ENCODE measurements at regions of chr18 and their contacts with region 1.

Region 1: DNA sequence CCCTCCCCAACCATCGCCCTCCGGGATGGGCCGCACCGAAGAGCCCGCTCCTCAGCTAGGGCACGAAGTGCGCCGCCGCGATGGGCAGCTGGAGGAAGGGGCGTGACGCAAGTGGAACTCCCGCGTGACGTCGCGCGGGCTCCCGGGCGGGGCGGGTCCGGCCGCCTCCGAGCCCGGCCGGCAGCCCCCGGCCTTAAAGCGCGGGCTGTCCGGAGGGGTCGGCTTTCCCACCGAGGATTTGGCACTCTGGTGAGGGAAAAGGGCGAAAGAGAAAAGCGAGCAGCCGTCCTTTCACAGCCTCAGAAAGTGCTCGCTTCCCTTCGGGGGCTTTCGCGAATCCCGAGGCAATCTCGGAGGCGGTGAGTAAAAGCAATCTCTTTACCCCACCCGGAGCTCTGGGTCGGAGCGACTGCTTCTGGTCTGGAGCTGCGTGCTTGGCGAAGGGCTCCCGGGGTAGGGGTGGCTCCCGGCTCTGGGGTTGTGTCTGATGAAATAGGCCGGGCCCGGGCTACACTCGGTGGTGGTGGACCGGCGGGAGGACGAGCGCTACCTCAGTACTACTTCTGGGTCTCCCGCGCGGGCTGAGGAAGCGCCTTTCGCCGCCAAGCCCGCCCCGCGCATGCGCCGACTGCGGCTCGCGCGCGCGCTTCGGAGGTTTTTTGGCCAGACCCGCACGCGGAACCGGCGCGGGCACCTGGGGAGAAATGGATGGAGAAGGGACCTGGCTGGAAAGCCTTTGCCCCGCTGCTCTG is at the start of gene RBBP8:
- DNase-seq: peak; percentile 43 to 46
- ATAC-seq: peak; percentile 82 to 88
- H3K4me3 ChIP-seq: peak within 1 kb of the TSS; percentile 56 to 90 (median 74)
- H3K27ac ChIP-seq: peak within 1 kb of the TSS; percentile 79 to 92 (median 86)
- H3K4me1 ChIP-seq: peaks cover 0 to 11% of the 10 kb centered on the region in 2 donors
- H3K27me3 ChIP-seq: no peaks in the 10 kb centered on the region
- CTCF ChIP-seq: no peak
- POLR2A ChIP-seq: peak; percentile 54 to 72
- total RNA-seq, gene RBBP8: 1.3 to 4.7 (median 1.7) TPM

Region 2: GRCh38 chr18:22790545-22791309 is 142.7 kb before region 1 on chr18:
- in situ Hi-C with region 1: no loop called
- intact Hi-C with region 1: loop called (anchors 10 kb)
- DNase-seq: no peak
- ATAC-seq: no peak
- H3K4me3 ChIP-seq: no peak overlapping the region
- H3K27ac ChIP-seq: no peak overlapping the region
- H3K4me1 ChIP-seq: no peaks in the 10 kb centered on the region
- H3K27me3 ChIP-seq: no peaks in the 10 kb centered on the region
- CTCF ChIP-seq: no peak
- POLR2A ChIP-seq: no peak

Region 3: DNA sequence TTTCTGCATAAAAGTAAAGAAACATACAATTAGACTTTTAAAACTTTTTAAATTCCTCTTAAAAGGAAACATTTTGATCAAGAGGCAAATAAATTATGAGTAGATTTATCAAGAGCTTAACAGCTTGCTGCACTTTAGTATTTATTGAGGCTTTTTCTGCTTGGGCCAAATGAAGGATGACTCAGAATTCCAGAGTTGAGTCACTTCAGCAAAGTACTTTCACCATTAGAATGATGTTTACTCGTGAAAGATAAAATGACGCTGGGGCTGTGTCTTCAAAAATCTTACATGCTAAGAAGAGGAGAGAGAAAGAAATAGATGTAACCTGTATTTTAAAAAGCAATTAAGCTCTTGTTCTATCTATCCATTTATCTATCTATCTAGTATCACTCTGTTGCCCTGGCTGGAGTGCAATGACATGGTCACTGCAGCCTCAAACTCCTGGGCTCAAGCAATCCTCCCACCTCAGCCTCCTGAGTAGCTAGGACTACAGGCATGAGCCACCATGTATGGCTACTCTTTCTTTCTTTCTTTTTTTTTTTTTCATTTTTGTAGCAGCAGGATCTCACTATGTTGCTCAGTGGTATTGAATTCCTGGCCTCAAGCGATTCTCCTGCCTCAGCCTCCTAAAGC is 444.4 kb after region 1 on chr18:
- in situ Hi-C with region 1: loop called in 1 of 4 experiments (anchors 25 kb)
- intact Hi-C with region 1: no loop called
- DNase-seq: no peak
- ATAC-seq: peak; percentile 68 to 75
- H3K4me3 ChIP-seq: no peak overlapping the region
- H3K27ac ChIP-seq: peak overlapping the region; percentile 42 to 64 (median 46)
- H3K4me1 ChIP-seq: peaks cover 7 to 9% of the 10 kb centered on the region in 2 donors
- H3K27me3 ChIP-seq: no peaks in the 10 kb centered on the region
- CTCF ChIP-seq: no peak
- POLR2A ChIP-seq: no peak

Region 4: DNA sequence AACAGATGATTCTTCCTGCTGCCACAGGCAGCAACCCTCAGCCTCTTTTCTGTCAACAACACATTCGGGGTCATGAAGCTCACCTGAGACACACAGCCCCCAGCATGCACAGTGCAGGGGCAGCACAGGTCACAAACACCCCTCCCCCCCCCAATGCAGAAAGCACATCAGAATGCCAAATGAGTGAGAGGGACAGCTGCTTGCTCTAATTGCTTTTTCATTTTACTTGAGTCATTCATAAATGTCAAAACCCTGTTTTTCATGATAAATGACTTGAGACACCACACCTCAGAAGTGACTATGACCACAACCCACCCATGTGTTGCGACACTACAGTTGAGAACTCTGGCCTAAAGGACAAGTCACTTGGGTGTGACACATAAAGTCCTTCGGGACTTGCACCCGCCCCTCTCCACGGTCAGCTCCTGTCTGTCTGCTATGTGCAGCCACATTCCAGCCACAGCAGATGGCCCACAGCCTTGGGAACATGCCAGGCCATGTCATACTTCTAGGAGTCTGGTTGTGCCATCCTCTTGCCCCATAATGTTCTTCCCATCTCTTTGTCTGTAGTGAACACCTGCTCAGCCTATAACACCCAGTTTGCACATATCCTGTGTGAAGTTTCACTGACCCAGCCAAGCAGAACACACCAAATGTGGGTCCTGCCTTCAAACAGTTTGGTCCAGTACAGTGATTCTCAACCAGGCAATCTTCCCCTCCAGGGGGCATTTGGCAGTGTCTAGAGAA is 489.5 kb after region 1 on chr18:
- in situ Hi-C with region 1: loop called in 1 of 4 experiments (anchors 25 kb)
- intact Hi-C with region 1: no loop called
- DNase-seq: peak; percentile 65 to 75
- ATAC-seq: peak; percentile 91 to 94
- H3K4me3 ChIP-seq: no peak overlapping the region
- H3K27ac ChIP-seq: no peak overlapping the region
- H3K4me1 ChIP-seq: peaks cover 0 to 5% of the 10 kb centered on the region in 2 donors
- H3K27me3 ChIP-seq: no peaks in the 10 kb centered on the region
- CTCF ChIP-seq: no peak
- POLR2A ChIP-seq: no peak

Region 5: GRCh38 chr18:23437357-23438045 is 504.1 kb after region 1 on chr18:
- in situ Hi-C with region 1: no loop called
- intact Hi-C with region 1: loop called (anchors 10 kb)
- DNase-seq: peak; percentile 44 to 68
- ATAC-seq: peak; percentile 90 to 95
- H3K4me3 ChIP-seq: peak overlapping the region; percentile 86 to 97 (median 93)
- H3K27ac ChIP-seq: peak overlapping the region; percentile 47 to 71 (median 62)
- H3K4me1 ChIP-seq: peaks cover 8 to 15% of the 10 kb centered on the region in 2 donors
- H3K27me3 ChIP-seq: no peaks in the 10 kb centered on the region
- CTCF ChIP-seq: no peak
- POLR2A ChIP-seq: peak in 1 of 2 donors; percentile 10

Region 6: DNA sequence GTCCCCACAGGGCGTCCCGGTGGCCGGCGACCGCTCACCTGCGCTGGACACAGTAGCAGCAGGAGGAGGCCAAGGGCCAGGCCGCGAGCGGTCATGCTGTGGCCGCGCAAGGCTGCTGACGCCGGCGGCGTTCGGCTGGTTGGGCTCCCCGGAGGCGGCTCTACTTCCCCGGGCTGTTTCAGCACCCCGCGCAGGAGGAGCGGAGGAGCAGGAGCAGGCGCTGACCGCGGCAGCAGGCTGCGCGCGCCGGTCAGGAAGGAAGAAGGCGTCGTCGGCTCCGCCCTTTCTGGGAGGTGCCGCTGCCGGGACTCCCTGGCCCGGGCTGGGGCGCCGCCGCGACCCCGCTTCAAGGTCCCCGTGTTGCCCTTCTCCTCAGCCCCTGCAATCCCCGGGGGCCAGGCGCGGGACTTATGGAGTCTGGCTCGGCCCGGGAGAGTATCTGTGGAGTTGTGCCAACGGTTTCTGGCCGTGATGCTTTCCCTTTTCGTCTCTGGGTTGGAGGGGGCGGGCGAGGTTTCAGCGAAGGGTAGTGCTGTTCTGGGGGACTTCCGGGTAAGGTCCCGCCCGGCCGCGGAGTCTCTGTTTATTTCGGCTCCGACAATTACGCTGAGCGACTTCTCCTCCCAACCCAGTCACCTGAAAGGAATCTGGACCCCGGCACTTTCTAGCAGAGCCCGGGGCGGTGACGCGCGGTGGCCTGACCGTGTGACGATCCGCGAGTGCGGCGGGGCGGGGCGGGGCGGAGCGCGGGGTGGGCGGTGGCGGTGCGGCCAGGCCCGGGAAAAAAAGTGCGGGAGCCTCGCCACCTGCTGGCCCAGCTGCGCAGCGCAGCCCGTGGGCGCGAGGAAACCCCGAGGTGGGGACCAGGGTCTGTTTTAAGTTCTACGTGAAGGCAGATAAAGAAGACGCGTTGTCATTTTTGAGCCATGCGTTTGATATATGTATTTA is 653.1 kb after region 1 on chr18 and contains the start of gene NPC1:
- in situ Hi-C with region 1: no loop called
- intact Hi-C with region 1: loop called (anchors 10 kb)
- DNase-seq: peak; percentile 87 to 89
- ATAC-seq: peak; percentile 91 to 93
- H3K4me3 ChIP-seq: peak within 1 kb of the TSS; percentile 77 to 97 (median 90)
- H3K27ac ChIP-seq: peak within 1 kb of the TSS; percentile 95 to 99 (median 97)
- H3K4me1 ChIP-seq: peaks cover 20 to 22% of the 10 kb centered on the region in 2 donors
- H3K27me3 ChIP-seq: no peaks in the 10 kb centered on the region
- CTCF ChIP-seq: peak; percentile 68 to 97 (median 90)
- POLR2A ChIP-seq: peak; percentile 94
- total RNA-seq, gene NPC1: 35.7 to 99.4 (median 46.2) TPM